ENCODE measurements at regions of chr5 and their contacts with region 1.

Region 1: GRCh38 chr5:51997949-51998348 is 614.7 kb downstream of the ISL1 start:
- DNase-seq: no peak
- ATAC-seq: no peak
- H3K4me3 ChIP-seq: no peak overlapping the region
- H3K27ac ChIP-seq: no peak overlapping the region
- H3K4me1 ChIP-seq: no peaks in the 10 kb centered on the region
- H3K27me3 ChIP-seq: no peaks in the 10 kb centered on the region
- CTCF ChIP-seq: no peak
- POLR2A ChIP-seq: no peak
- RAD21 ChIP-seq: no peak

Region 2: GRCh38 chr5:52024363-52024762 is 26.4 kb after region 1 on chr5:
- CTCF ChIA-PET with region 1: no interaction called
- POLR2A ChIA-PET with region 1: interaction called, 11 read pairs
- dilution Hi-C with region 1: no loop called
- in situ Hi-C with region 1: no loop called
- intact Hi-C with region 1: no loop called
- DNase-seq: no peak
- ATAC-seq: no peak
- H3K4me3 ChIP-seq: no peak overlapping the region
- H3K27ac ChIP-seq: no peak overlapping the region
- H3K4me1 ChIP-seq: no peaks in the 10 kb centered on the region
- H3K27me3 ChIP-seq: no peaks in the 10 kb centered on the region
- CTCF ChIP-seq: no peak
- POLR2A ChIP-seq: no peak
- RAD21 ChIP-seq: no peak